ENCODE measurements at regions of chr2 and their contacts with region 1.

Region 1: GRCh38 chr2:218995972-218996711 is 2.9 kb upstream of the CRYBA2 start:
- DNase-seq: peak; percentile 58 to 83 (median 78)
- ATAC-seq: peak; percentile 80
- H3K4me3 ChIP-seq: peak overlapping the region in 1 of 2 experiments; percentile 34
- H3K4me3 Mint-ChIP-seq: peak overlapping the region; percentile 22
- H3K27ac ChIP-seq: no peak overlapping the region
- H3K27ac Mint-ChIP-seq: no peak overlapping the region
- H3K4me1 ChIP-seq: peaks cover 17% of the 10 kb centered on the region
- H3K4me1 Mint-ChIP-seq: peaks cover 9% of the 10 kb centered on the region
- H3K27me3 ChIP-seq: peaks cover 29 to 39% of the 10 kb centered on the region in 2 experiments
- H3K27me3 Mint-ChIP-seq: peaks cover 67% of the 10 kb centered on the region
- CTCF ChIP-seq: peak; percentile 75

Region 2: GRCh38 chr2:218892693-218893348 is 103.3 kb before region 1 on chr2:
- CTCF ChIA-PET with region 1: no interaction called
- POLR2A ChIA-PET with region 1: no interaction called
- intact Hi-C with region 1: no loop called
- DNase-seq: peak; percentile 71 to 97 (median 85)
- ATAC-seq: peak; percentile 65
- H3K4me3 ChIP-seq: peak overlapping the region; percentile 36 to 51
- H3K4me3 Mint-ChIP-seq: peak overlapping the region; percentile 72
- H3K27ac ChIP-seq: peak overlapping the region; percentile 68 to 84
- H3K27ac Mint-ChIP-seq: peak overlapping the region; percentile 95
- H3K4me1 ChIP-seq: peaks cover 61% of the 10 kb centered on the region
- H3K4me1 Mint-ChIP-seq: peaks cover 44% of the 10 kb centered on the region
- H3K27me3 ChIP-seq: peaks cover 0 to 7% of the 10 kb centered on the region in 2 experiments
- H3K27me3 Mint-ChIP-seq: no peaks in the 10 kb centered on the region
- CTCF ChIP-seq: peak; percentile 67

Region 3: GRCh38 chr2:218979846-218980734 is 16.1 kb before region 1 on chr2:
- CTCF ChIA-PET with region 1: interaction called, 19 read pairs
- POLR2A ChIA-PET with region 1: no interaction called
- intact Hi-C with region 1: loop called in 1 of 2 experiments (anchors 1 kb)
- DNase-seq: peak; percentile 72 to 88 (median 83)
- ATAC-seq: peak; percentile 89
- H3K4me3 ChIP-seq: peak overlapping the region; percentile 3 to 18
- H3K4me3 Mint-ChIP-seq: peak overlapping the region; percentile 76
- H3K27ac ChIP-seq: no peak overlapping the region
- H3K27ac Mint-ChIP-seq: no peak overlapping the region
- H3K4me1 ChIP-seq: peaks cover 31% of the 10 kb centered on the region
- H3K4me1 Mint-ChIP-seq: peaks cover 34% of the 10 kb centered on the region
- H3K27me3 ChIP-seq: peaks cover 49% of the 10 kb centered on the region in 2 experiments
- H3K27me3 Mint-ChIP-seq: peaks cover 64% of the 10 kb centered on the region
- CTCF ChIP-seq: peak; percentile 94

Measured in CD8-positive, alpha-beta T cell (primary cell).